ENCODE measurements at regions of chr7 and their contacts with region 1.

Region 1: GRCh38 chr7:867672-868486 is 8.5 kb upstream of the GET4 start:
- DNase-seq: peak; percentile 43 to 55
- ATAC-seq: peak; percentile 42 to 89 (median 84)
- H3K4me3 ChIP-seq: no peak overlapping the region
- H3K27ac ChIP-seq: peak overlapping the region; percentile 25 to 88 (median 74)
- H3K4me1 ChIP-seq: peaks cover 14 to 46% (median 29%) of the 10 kb centered on the region in 9 donors
- H3K27me3 ChIP-seq: no peaks in the 10 kb centered on the region
- CTCF ChIP-seq: peak in 2 of 9 donors; percentile 15 to 28

Region 2: GRCh38 chr7:322111-322671 is 545.7 kb before region 1 on chr7:
- intact Hi-C with region 1: loop called in 5 of 10 experiments (anchors 5 to 10 kb)
- DNase-seq: peak; percentile 48 to 79
- ATAC-seq: peak; percentile 65 to 90 (median 80)
- H3K4me3 ChIP-seq: peak overlapping the region in 1 of 10 donors; percentile 20
- H3K27ac ChIP-seq: no peak overlapping the region
- H3K4me1 ChIP-seq: peaks cover 0 to 33% (median 5%) of the 10 kb centered on the region in 9 donors
- H3K27me3 ChIP-seq: peaks cover 0 to 25% (median 15%) of the 10 kb centered on the region in 7 donors
- CTCF ChIP-seq: peak; percentile 84 to 98 (median 95)

Region 3: GRCh38 chr7:821688-822087 is 46.2 kb before region 1 on chr7:
- intact Hi-C with region 1: loop called in 5 of 10 experiments (anchors 5 to 10 kb)
- DNase-seq: peak in 1 of 2 donors; percentile 18
- ATAC-seq: peak; percentile 21 to 77 (median 68)
- H3K4me3 ChIP-seq: no peak overlapping the region
- H3K27ac ChIP-seq: peak overlapping the region in 8 of 10 donors; percentile 18 to 97 (median 58)
- H3K4me1 ChIP-seq: peaks cover 18 to 94% (median 81%) of the 10 kb centered on the region in 9 donors
- H3K27me3 ChIP-seq: peaks cover 0 to 8% (median 0%) of the 10 kb centered on the region in 7 donors
- CTCF ChIP-seq: peak in 7 of 9 donors; percentile 16 to 57 (median 28)

Region 4: DNA sequence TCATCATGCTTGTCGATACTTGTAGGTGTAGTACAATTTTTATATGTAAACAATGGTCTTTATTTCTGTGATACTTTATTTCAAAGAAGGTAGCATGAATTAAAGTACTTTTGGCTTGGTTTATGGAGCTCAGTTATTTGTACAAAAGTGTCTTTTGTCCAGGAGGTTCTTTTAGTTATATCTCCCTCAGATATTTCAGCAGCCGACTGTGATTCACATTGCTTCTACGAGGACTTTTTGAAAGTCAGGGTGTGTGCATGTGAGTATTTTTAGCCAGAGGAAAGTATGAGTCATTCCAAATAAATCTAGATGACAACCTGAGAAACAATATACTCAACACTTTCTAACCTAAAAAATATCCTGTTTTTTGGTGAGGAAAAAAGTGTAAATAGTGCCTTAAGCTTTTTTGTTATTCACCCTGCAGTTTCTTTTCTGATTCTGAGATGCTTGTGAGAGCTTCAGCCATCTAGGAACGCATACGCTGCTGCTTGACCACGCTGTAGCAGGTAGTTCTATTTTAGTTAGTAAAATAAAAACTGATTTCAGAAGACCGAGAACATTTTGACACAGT is 36.2 kb before region 1 on chr7:
- intact Hi-C with region 1: loop called in 8 of 10 experiments (anchors 2 to 10 kb)
- DNase-seq: no peak
- ATAC-seq: peak; percentile 46 to 89 (median 80)
- H3K4me3 ChIP-seq: peak overlapping the region in 9 of 10 donors; percentile 0 to 36 (median 31)
- H3K27ac ChIP-seq: peak overlapping the region; percentile 78 to 97 (median 92)
- H3K4me1 ChIP-seq: peaks cover 43 to 100% (median 76%) of the 10 kb centered on the region in 9 donors
- H3K27me3 ChIP-seq: no peaks in the 10 kb centered on the region
- CTCF ChIP-seq: no peak

Region 5: DNA sequence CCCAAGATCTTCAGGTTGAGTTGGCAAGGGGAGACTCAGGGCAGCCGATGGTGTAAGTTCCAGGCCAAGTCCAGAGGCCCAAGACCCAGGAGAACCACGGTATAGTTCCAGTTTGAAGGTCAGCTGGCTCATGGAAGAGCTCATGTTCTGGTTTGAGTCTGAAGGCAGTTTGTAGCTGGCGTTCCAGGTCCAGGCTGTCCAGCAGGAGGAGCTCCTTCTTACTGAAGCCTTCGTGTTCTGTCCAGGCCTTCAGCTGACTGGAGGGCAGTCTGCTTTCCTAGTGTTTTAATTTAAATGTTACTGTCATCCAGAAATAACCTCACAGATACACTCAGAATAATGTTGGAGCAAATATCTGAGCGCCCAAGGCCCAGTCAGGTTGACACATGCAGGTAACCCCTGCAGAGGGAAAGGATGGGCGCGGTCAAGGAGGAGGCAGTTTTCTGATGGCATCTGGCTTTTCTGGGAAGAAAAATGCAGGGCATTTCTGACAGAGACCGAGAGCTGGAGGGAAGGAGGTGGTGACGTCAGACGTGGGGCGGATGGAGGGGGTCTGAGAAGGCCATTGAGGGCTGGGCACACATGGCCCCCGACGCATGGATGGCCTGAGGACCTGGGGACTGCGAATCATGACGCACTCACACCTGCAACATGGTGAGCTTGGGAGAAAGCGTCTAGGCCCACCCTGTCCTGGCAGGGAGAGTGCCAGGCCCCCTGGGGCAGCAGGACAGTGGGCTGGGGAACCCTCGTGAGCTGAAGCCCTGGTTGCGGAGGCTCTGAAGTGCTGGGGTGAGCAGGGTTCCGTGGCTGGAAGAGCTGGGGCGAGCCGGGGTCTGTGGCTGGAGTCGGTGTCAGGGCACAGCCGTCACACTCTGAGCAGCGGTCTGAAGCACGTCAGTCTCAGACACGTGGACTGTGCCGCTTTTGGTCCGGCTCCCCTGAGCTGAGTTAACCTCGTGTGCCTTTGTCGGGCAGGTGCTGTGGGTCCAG is 31.2 kb before region 1 on chr7:
- intact Hi-C with region 1: loop called in 7 of 10 experiments (anchors 2 to 5 kb)
- DNase-seq: no peak
- ATAC-seq: peak; percentile 18 to 68 (median 48)
- H3K4me3 ChIP-seq: no peak overlapping the region
- H3K27ac ChIP-seq: peak overlapping the region; percentile 25 to 97 (median 74)
- H3K4me1 ChIP-seq: peaks cover 24 to 79% (median 56%) of the 10 kb centered on the region in 9 donors
- H3K27me3 ChIP-seq: no peaks in the 10 kb centered on the region
- CTCF ChIP-seq: peak; percentile 28 to 65 (median 55)